ENCODE measurements at regions of chr16 and their contacts with region 1.

Region 1: DNA sequence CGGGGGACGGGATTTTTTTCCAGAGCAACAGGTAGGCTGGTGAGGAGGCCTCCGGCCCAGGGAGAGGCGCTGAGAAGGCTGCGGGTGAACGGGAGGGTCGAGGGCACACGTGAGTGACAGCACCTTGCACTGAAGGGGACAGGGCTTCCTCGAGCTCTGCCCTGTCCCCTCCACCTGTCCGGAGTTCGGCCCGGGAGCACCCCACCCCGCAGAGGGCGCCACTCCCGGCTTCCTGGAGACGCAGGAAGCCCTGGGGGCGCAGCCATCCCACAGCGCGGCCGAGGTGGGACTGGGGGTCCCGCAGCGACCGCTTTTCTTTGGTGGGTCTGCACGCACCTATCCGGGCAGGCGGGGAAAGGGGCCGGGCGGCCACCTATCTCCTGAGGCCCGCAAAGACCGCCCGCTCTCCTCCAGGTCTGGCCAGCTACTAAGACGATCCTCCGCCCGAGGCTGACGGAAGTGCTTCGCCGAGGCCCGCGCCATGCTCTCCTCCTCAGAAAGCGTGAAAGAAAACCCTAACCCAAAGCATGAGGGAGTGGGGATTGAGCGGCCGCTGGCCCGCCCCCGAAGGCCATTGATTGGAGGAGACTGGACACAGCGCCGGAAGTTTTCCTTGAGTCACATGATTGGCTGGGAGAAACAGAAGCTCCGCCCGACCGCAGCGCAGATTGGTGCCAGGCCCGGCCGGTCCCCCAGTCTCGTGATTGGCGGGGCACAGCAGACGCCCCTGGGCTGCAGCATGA is 34.3 kb downstream of the DDX19A start:
- DNase-seq: peak; percentile 74
- ATAC-seq: peak; percentile 93
- H3K4me3 ChIP-seq: peak overlapping the region; percentile 61 to 74
- H3K27ac ChIP-seq: peak overlapping the region; percentile 86
- H3K4me1 ChIP-seq: peaks cover 13% of the 10 kb centered on the region
- H3K27me3 ChIP-seq: no peaks in the 10 kb centered on the region
- CTCF ChIP-seq: no peak

Region 2: GRCh38 chr16:70342016-70342415 is 39.0 kb before region 1 on chr16:
- CTCF ChIA-PET with region 1: no interaction called
- POLR2A ChIA-PET with region 1: no interaction called
- in situ Hi-C with region 1: no loop called
- intact Hi-C with region 1: no loop called
- DNase-seq: no peak
- ATAC-seq: no peak
- H3K4me3 ChIP-seq: no peak overlapping the region
- H3K27ac ChIP-seq: no peak overlapping the region
- H3K4me1 ChIP-seq: peaks cover 3% of the 10 kb centered on the region; the same call in 1 of the 2 replicates
- H3K27me3 ChIP-seq: no peaks in the 10 kb centered on the region
- CTCF ChIP-seq: no peak

Region 3: DNA sequence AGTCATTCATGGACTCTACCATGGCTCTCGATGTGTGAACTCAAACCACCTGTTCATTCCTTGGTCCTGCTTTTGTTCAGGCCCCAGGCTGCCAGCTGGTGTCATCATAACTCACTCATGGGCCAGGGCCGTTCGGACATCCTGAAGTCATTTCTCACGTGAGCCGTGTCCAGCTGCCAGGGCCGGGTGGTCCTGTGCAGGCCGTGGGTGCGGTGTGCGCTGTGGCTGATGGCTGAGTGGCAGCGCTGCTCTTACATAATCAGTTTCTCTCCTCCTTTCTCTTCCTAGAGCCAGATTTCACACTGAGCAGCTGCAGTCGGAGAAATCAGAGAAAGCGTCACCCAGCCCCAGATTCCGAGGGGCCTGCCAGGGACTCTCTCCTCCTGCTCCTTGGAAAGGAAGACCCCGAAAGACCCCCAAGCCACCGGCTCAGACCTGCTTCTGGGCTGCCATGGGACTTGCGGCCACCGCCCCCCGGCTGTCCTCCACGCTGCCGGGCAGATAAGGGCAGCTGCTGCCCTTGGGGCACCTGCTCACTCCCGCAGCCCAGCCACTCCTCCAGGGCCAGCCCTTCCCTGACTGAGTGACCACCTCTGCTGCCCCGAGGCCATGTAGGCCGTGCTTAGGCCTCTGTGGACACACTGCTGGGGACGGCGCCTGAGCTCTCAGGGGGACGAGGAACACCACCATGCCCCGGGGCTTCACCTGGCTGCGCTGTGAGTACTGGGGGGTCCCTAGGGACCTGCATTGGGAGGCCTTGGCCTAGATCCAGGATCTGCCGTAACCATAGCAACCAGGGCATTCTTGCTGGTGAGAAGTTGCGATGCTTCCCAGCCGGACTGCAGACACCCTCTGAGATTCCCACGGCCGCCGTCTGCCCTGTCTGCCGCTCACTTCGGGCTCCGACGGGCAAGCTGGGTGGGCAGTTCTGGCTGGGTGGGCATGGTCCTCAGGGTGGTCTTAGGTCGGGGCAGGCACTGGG is 265.5 kb after region 1 on chr16 and contains the start of gene IL34:
- CTCF ChIA-PET with region 1: interaction called, 10 read pairs
- POLR2A ChIA-PET with region 1: no interaction called
- in situ Hi-C with region 1: no loop called
- intact Hi-C with region 1: no loop called
- DNase-seq: no peak
- ATAC-seq: no peak
- H3K4me3 ChIP-seq: no peak within 1 kb of the TSS
- H3K27ac ChIP-seq: no peak within 1 kb of the TSS
- H3K4me1 ChIP-seq: no peaks in the 10 kb centered on the region; the same call in 1 of the 2 replicates
- H3K27me3 ChIP-seq: no peaks in the 10 kb centered on the region
- CTCF ChIP-seq: no peak
- total RNA-seq, gene IL34: 5.8 TPM

Measured in Panc1 (cell line).